HepG2 (cell line): ENCODE measurements at regions of chr3 and their contacts with region 1.

Region 1: GRCh38 chr3:84724877-84725276 is 233.9 kb upstream of the CADM2 start:
- DNase-seq: no peak
- ATAC-seq: no peak
- H3K4me3 ChIP-seq: no peak overlapping the region
- H3K27ac ChIP-seq: no peak overlapping the region
- H3K4me1 ChIP-seq: no peaks in the 10 kb centered on the region
- H3K27me3 ChIP-seq: no peaks in the 10 kb centered on the region
- CTCF ChIP-seq: no peak
- EP300 ChIP-seq: no peak
- POLR2A ChIP-seq: no peak
- RAD21 ChIP-seq: no peak

Region 2: GRCh38 chr3:83321891-83322290 is 1403.0 kb before region 1 on chr3:
- CTCF ChIA-PET with region 1: no interaction called
- POLR2A ChIA-PET with region 1: no interaction called
- in situ Hi-C with region 1: no loop called
- intact Hi-C with region 1: loop called (anchors 10 kb)
- DNase-seq: no peak
- ATAC-seq: no peak
- H3K4me3 ChIP-seq: no peak overlapping the region
- H3K27ac ChIP-seq: no peak overlapping the region
- H3K4me1 ChIP-seq: no peaks in the 10 kb centered on the region
- H3K27me3 ChIP-seq: no peaks in the 10 kb centered on the region
- CTCF ChIP-seq: no peak
- EP300 ChIP-seq: no peak
- POLR2A ChIP-seq: no peak
- RAD21 ChIP-seq: no peak

Region 3: DNA sequence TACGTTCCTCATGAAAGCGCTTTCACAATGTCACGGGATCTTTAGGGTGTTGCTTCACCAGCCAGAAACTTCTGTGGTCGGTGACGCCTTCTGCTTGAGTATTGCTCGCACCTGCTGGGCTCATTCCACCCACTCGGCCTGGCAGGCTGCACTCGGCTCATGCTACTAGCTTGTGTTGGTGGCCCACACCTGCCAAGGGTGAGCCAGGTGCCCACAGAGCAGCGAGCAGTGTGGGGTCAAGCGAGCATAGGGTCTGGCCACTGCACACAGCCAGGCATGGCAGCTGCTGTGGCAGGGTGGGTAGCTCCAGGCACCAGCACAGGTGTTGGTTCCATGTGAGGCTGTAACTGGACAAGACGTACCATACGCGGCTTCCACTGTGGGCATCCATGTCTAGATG is 31.0 kb after region 1 on chr3:
- CTCF ChIA-PET with region 1: no interaction called
- POLR2A ChIA-PET with region 1: no interaction called
- in situ Hi-C with region 1: no loop called
- intact Hi-C with region 1: no loop called
- DNase-seq: no peak
- ATAC-seq: no peak
- H3K4me3 ChIP-seq: no peak overlapping the region
- H3K27ac ChIP-seq: no peak overlapping the region
- H3K4me1 ChIP-seq: no peaks in the 10 kb centered on the region
- H3K27me3 ChIP-seq: no peaks in the 10 kb centered on the region
- CTCF ChIP-seq: no peak
- EP300 ChIP-seq: no peak
- POLR2A ChIP-seq: no peak
- RAD21 ChIP-seq: no peak